ENCODE measurements at regions of chr1 and their contacts with region 1.

Region 1: DNA sequence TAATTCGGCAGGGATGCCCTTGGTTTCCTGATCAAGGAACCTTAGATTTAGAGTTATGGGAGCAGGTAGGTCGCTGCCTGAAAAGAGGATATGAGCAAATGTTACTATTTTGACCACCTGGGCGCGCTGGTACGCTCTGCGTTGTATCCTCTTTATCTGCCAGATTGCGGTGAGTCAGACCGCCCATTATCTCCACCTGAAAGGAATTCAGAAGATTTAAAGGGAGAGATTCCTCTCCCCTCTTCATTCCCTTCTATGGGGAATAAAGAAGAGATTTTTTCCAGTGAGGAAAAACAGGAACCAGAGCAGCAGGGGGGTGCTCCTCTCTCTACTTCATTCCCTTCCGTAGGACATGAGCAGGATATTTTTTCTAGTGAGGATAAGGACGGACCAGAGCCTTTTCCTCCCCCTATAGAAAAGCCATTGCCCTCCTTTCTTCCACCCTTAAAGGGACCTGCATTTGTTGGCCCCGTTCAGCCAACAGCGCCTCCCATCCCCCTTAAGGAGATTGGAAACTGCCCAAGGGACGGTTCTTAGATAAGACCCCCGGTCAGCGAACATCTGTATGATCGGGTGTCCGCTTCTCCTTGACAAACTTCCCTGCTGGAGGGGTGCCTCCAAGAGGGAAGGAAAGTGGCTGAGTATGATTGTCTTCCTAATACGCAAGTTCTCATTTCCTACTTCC is 34.1 kb downstream of the CLCA1 start:
- DNase-seq: peak; percentile 46
- H3K4me3 Mint-ChIP-seq: peak overlapping the region; percentile 76
- H3K27ac Mint-ChIP-seq: peak overlapping the region; percentile 21
- H3K4me1 Mint-ChIP-seq: peaks cover 26% of the 10 kb centered on the region
- H3K27me3 Mint-ChIP-seq: peaks cover 14% of the 10 kb centered on the region
- CTCF ChIP-seq: no peak

Region 2: GRCh38 chr1:86419277-86419903 is 83.5 kb before region 1 on chr1:
- CTCF ChIA-PET with region 1: no interaction called
- intact Hi-C with region 1: loop called (anchors 1 kb)
- DNase-seq: peak; percentile 64
- H3K4me3 Mint-ChIP-seq: no peak overlapping the region
- H3K27ac Mint-ChIP-seq: no peak overlapping the region
- H3K4me1 Mint-ChIP-seq: peaks cover 21% of the 10 kb centered on the region
- H3K27me3 Mint-ChIP-seq: no peaks in the 10 kb centered on the region
- CTCF ChIP-seq: peak; percentile 66

Region 3: DNA sequence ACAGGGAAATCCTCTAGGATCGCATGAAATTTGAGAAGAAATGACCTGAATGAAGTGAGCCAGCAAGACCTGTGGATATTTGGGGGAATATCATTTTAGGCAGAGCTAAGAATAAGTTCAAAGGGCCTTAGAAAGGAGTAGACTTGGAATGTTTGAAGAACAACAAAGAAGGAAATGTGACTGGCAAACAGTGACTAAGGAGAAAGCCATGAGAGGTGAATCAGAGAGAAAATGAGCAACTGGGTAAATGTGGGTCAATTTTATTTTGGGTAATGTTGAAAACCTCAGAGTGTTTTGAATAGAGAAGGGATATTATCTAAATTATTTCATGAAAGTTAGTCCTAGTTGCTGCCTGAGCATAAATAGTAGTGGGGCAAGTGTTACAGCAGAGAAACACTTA is 1498.6 kb after region 1 on chr1:
- CTCF ChIA-PET with region 1: no interaction called
- intact Hi-C with region 1: no loop called
- DNase-seq: no peak
- H3K4me3 Mint-ChIP-seq: no peak overlapping the region
- H3K27ac Mint-ChIP-seq: peak overlapping the region; percentile 48
- H3K4me1 Mint-ChIP-seq: peaks cover 26% of the 10 kb centered on the region
- H3K27me3 Mint-ChIP-seq: no peaks in the 10 kb centered on the region
- CTCF ChIP-seq: no peak

Measured in Calu3 (cell line).